B cell (primary cell): ENCODE measurements at regions of chr6 and their contacts with region 1.

Region 1: DNA sequence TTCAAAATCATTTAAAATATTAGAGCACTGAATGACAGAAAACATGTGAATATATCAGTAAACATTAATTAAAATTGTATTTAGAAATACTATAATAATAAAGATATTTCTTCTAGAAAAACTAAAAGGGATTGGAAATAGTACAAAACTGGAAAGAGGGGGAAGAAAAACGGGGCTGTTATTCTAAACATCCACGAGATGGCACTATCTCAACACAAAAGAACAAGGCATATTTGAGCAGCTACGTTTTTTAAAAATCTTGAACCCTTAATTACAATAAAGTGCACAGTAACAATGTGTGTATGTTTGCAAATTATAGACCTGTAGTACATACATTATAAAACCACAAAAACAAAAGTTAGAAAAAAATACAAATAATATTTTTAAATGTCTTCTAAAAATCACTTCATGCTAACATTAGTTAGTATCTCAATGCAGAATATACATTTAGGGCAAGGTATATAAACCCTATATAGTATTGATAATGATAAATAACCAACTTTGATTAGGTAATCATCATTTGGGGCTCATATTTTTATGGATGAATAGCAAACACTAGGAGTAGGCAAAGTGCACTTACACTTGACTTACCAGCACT is 42.5 kb upstream of the PNISR start:
- DNase-seq: peak; percentile 48
- ATAC-seq: peak; percentile 17
- H3K4me3 ChIP-seq: no peak overlapping the region
- H3K4me3 Mint-ChIP-seq: no peak overlapping the region
- H3K27ac ChIP-seq: no peak overlapping the region
- H3K27ac Mint-ChIP-seq: no peak overlapping the region
- H3K4me1 ChIP-seq: no peaks in the 10 kb centered on the region
- H3K4me1 Mint-ChIP-seq: no peaks in the 10 kb centered on the region
- H3K27me3 ChIP-seq: no peaks in the 10 kb centered on the region
- H3K27me3 Mint-ChIP-seq: no peaks in the 10 kb centered on the region
- CTCF ChIP-seq: peak; percentile 92

Region 2: DNA sequence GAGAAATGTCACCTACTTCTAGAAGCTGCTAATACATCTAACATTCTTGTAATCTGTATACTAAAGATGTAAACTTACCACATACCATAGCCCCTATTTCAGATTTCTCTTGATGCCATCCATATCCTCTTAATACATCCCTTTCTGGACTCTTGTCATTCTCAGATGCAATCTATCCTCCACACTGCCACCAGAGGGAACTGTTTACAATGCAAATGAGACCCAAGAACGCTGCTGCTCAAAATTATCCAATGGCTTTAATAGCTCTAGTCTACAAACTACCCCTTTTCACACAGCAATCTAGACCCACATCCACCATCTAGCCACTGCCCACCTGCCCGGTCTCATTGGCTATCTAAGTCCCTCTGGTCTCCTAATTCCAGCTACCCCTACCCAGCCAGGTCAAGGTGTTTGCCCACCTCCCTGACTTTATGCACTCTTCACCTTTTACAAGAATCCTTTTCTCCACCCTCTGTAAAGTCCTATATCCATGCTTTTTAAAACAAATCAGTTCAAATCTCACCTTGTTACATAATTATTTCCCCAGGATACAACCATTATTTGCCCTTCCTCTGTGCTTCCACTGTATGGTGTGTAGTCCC is 133.0 kb before region 1 on chr6:
- CTCF ChIA-PET with region 1: no interaction called
- POLR2A ChIA-PET with region 1: no interaction called
- intact Hi-C with region 1: no loop called
- DNase-seq: peak; percentile 15
- ATAC-seq: no peak
- H3K4me3 ChIP-seq: no peak overlapping the region
- H3K4me3 Mint-ChIP-seq: no peak overlapping the region
- H3K27ac ChIP-seq: no peak overlapping the region
- H3K27ac Mint-ChIP-seq: no peak overlapping the region
- H3K4me1 ChIP-seq: peaks cover 0 to 3% of the 10 kb centered on the region in 2 donors
- H3K4me1 Mint-ChIP-seq: peaks cover 12% of the 10 kb centered on the region
- H3K27me3 ChIP-seq: peaks cover 0 to 15% (median 7%) of the 10 kb centered on the region in 4 experiments
- H3K27me3 Mint-ChIP-seq: peaks cover 16% of the 10 kb centered on the region
- CTCF ChIP-seq: peak; percentile 48

Region 3: GRCh38 chr6:99520855-99521632 is 53.4 kb after region 1 on chr6:
- CTCF ChIA-PET with region 1: interaction called, 14 read pairs
- POLR2A ChIA-PET with region 1: no interaction called
- intact Hi-C with region 1: no loop called
- DNase-seq: peak; percentile 79
- ATAC-seq: peak; percentile 86
- H3K4me3 ChIP-seq: peak overlapping the region; percentile 77 to 97 (median 79)
- H3K4me3 Mint-ChIP-seq: peak overlapping the region; percentile 99
- H3K27ac ChIP-seq: peak overlapping the region; percentile 54 to 62
- H3K27ac Mint-ChIP-seq: peak overlapping the region; percentile 98
- H3K4me1 ChIP-seq: peaks cover 11 to 15% of the 10 kb centered on the region in 2 donors
- H3K4me1 Mint-ChIP-seq: peaks cover 39% of the 10 kb centered on the region
- H3K27me3 ChIP-seq: no peaks in the 10 kb centered on the region
- H3K27me3 Mint-ChIP-seq: no peaks in the 10 kb centered on the region
- CTCF ChIP-seq: peak; percentile 96

Region 4: GRCh38 chr6:99588618-99589289 is 121.1 kb after region 1 on chr6:
- CTCF ChIA-PET with region 1: interaction called, 4 read pairs
- POLR2A ChIA-PET with region 1: no interaction called
- intact Hi-C with region 1: loop called (anchors 5 kb)
- DNase-seq: peak; percentile 76
- ATAC-seq: peak; percentile 76
- H3K4me3 ChIP-seq: peak overlapping the region; percentile 39 to 76 (median 58)
- H3K4me3 Mint-ChIP-seq: peak overlapping the region; percentile 92
- H3K27ac ChIP-seq: no peak overlapping the region
- H3K27ac Mint-ChIP-seq: peak overlapping the region; percentile 70
- H3K4me1 ChIP-seq: peaks cover 29 to 33% of the 10 kb centered on the region in 2 donors
- H3K4me1 Mint-ChIP-seq: peaks cover 30% of the 10 kb centered on the region
- H3K27me3 ChIP-seq: peaks cover 5 to 55% (median 47%) of the 10 kb centered on the region in 4 experiments
- H3K27me3 Mint-ChIP-seq: peaks cover 57% of the 10 kb centered on the region
- CTCF ChIP-seq: peak; percentile 29

Region 5: GRCh38 chr6:99746261-99746895 is 278.8 kb after region 1 on chr6:
- CTCF ChIA-PET with region 1: interaction called, 114 read pairs
- POLR2A ChIA-PET with region 1: no interaction called
- intact Hi-C with region 1: loop called (anchors 1 kb)
- DNase-seq: peak; percentile 74
- ATAC-seq: peak; percentile 73
- H3K4me3 ChIP-seq: no peak overlapping the region
- H3K4me3 Mint-ChIP-seq: no peak overlapping the region
- H3K27ac ChIP-seq: no peak overlapping the region
- H3K27ac Mint-ChIP-seq: no peak overlapping the region
- H3K4me1 ChIP-seq: no peaks in the 10 kb centered on the region
- H3K4me1 Mint-ChIP-seq: no peaks in the 10 kb centered on the region
- H3K27me3 ChIP-seq: peaks cover 0 to 7% (median 1%) of the 10 kb centered on the region in 4 experiments
- H3K27me3 Mint-ChIP-seq: peaks cover 14% of the 10 kb centered on the region
- CTCF ChIP-seq: peak; percentile 94

Region 6: GRCh38 chr6:99852031-99852430 is 384.4 kb after region 1 on chr6:
- CTCF ChIA-PET with region 1: no interaction called
- POLR2A ChIA-PET with region 1: no interaction called
- intact Hi-C with region 1: no loop called
- DNase-seq: no peak
- ATAC-seq: no peak
- H3K4me3 ChIP-seq: no peak overlapping the region
- H3K4me3 Mint-ChIP-seq: no peak overlapping the region
- H3K27ac ChIP-seq: no peak overlapping the region
- H3K27ac Mint-ChIP-seq: no peak overlapping the region
- H3K4me1 ChIP-seq: no peaks in the 10 kb centered on the region
- H3K4me1 Mint-ChIP-seq: no peaks in the 10 kb centered on the region
- H3K27me3 ChIP-seq: no peaks in the 10 kb centered on the region
- H3K27me3 Mint-ChIP-seq: peaks cover 20% of the 10 kb centered on the region
- CTCF ChIP-seq: no peak

Region 7: DNA sequence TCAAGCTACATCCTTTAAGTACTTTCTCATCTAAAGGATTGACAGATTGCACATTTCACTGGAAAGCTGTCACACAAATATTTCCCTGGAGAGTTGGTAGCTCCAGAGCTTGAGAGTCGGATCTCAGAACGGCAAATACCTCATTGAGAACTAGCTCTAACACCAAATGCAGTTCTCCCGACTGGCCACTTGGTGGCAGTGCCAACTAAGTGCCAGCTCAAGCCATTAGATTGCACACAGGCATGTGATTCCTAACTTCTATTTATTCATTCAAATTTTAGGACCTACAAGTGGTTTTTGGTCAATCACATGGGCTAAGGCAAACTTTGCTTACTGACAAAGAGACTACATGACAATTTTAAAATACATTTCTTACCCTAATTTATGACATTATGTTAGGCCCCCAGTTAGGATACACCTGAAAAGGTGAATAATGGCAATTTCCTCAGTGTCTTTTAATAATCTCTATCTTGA is 534.3 kb after region 1 on chr6:
- CTCF ChIA-PET with region 1: interaction called, 3 read pairs
- POLR2A ChIA-PET with region 1: no interaction called
- intact Hi-C with region 1: loop called (anchors 10 kb)
- DNase-seq: peak; percentile 37
- ATAC-seq: peak; percentile 49
- H3K4me3 ChIP-seq: no peak overlapping the region
- H3K4me3 Mint-ChIP-seq: no peak overlapping the region
- H3K27ac ChIP-seq: no peak overlapping the region
- H3K27ac Mint-ChIP-seq: no peak overlapping the region
- H3K4me1 ChIP-seq: no peaks in the 10 kb centered on the region
- H3K4me1 Mint-ChIP-seq: no peaks in the 10 kb centered on the region
- H3K27me3 ChIP-seq: peaks cover 0 to 5% (median 2%) of the 10 kb centered on the region in 4 experiments
- H3K27me3 Mint-ChIP-seq: peaks cover 29% of the 10 kb centered on the region
- CTCF ChIP-seq: peak; percentile 97